ENCODE measurements at regions of chr12 and their contacts with region 1.

Region 1: DNA sequence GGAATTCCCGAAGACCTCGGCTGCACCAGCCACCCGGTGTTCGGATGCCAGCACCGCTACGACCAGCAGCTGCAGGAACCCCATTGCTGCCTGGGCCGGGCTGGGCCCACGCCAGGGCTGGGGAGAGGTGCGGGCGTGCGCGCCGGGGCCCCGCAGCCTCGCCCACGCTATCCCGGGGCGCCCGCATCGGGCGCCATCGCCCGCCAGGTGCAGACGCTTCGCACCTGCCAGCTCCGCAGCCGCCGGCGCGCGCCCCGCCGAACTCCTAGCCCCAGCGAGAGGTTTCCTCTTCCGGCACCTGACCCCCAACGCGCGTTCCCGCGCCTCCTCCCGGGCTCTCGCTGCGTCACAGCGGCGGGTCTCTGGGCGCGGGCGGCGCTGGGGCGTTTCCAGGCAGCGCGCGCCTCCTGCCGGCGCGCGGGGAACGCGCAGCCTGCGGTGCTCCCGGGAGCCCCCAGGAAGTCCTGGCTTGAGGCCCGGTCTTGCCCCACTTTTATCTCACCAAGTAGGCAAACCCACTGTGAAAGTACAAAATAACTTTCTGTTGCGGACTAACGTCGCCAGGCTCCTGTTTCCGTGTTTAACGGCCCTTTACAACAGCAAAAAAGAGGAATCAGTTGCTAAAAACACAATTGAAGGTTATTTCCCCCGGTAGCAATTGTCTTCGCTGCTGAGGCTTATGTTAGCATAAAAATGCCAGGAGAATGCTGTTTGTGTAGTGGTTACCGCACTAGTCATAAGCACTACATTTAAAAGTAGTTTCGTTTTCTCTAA is at the start of gene TM7SF3:
- DNase-seq: peak; percentile 83 to 98
- H3K4me3 ChIP-seq: peak within 1 kb of the TSS; percentile 97
- H3K27ac ChIP-seq: peak within 1 kb of the TSS; percentile 48
- H3K4me1 ChIP-seq: peaks cover 35% of the 10 kb centered on the region
- H3K27me3 ChIP-seq: no peaks in the 10 kb centered on the region
- CTCF ChIP-seq: peak; percentile 82
- total RNA-seq, gene TM7SF3: 57.0 and 67.7 TPM in 2 replicates

Region 2: GRCh38 chr12:26629864-26630263 is 384.4 kb before region 1 on chr12:
- CTCF ChIA-PET with region 1: no interaction called
- POLR2A ChIA-PET with region 1: no interaction called
- intact Hi-C with region 1: loop called (anchors 10 kb)
- DNase-seq: no peak
- H3K4me3 ChIP-seq: no peak overlapping the region
- H3K27ac ChIP-seq: no peak overlapping the region
- H3K4me1 ChIP-seq: peaks cover 6% of the 10 kb centered on the region; the same call in 1 of the 2 replicates
- H3K27me3 ChIP-seq: no peaks in the 10 kb centered on the region
- CTCF ChIP-seq: no peak

Region 3: GRCh38 chr12:26832822-26833742 is 181.2 kb before region 1 on chr12 and contains the start of gene ITPR2:
- CTCF ChIA-PET with region 1: interaction called, 3 read pairs
- POLR2A ChIA-PET with region 1: no interaction called
- intact Hi-C with region 1: loop called (anchors 1 kb)
- DNase-seq: peak; percentile 80 to 99
- H3K4me3 ChIP-seq: peak within 1 kb of the TSS; percentile 83
- H3K27ac ChIP-seq: peak within 1 kb of the TSS; percentile 61
- H3K4me1 ChIP-seq: peaks cover 14% of the 10 kb centered on the region
- H3K27me3 ChIP-seq: no peaks in the 10 kb centered on the region
- CTCF ChIP-seq: peak; percentile 51; the same call in 1 of the 2 replicates
- total RNA-seq, gene ITPR2: 16.2 and 26.0 TPM in 2 replicates

Region 4: DNA sequence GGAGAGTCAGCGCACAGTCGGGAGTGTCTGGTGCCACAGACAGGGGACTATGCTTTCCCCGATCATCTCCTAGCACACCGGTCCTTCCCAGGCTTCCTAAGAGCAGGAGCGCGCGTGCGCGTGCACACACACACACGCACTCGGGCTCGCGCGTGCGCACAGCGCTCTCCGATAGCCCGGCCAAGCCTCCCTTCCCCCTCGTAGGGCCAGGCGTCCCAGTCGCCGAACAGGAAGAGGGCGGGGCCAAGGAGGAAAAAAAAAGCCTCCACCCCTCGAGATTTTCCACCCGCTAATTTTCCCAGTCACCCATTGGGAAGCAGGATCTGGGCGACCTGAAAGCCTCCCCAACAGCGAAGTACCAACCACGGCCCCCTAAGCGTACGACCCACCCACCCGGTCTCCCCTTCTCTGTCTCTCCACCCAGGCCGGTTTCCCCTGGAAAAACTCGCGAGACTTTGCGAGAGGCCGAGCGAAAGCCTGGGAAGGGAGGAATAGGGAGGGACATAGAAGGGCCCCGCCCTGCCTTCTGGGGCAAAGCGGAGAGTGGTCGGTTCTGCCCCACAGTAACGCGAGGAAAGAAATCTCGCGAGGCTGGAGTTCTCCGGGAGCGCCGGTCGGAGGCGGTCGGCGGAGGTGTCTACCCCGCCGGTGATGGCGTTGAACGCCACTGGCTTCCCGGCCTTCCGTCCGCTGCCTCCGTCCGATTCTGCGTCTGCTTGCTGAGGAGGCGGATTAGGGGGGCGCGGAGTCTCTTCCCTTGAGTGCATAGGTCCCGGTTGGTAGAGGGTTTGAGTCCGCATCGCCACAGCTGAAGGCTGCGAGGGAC is 76.2 kb before region 1 on chr12 and contains the starts of genes FGFR1OP2 and INTS13:
- CTCF ChIA-PET with region 1: interaction called, 4 read pairs
- POLR2A ChIA-PET with region 1: no interaction called
- intact Hi-C with region 1: loop called (anchors 1 kb)
- DNase-seq: peak; percentile 94 to 100
- H3K4me3 ChIP-seq: peak within 1 kb of the TSS; percentile 90
- H3K27ac ChIP-seq: peak within 1 kb of the TSS; percentile 92
- H3K4me1 ChIP-seq: peaks cover 40% of the 10 kb centered on the region
- H3K27me3 ChIP-seq: no peaks in the 10 kb centered on the region
- CTCF ChIP-seq: no peak
- total RNA-seq, gene FGFR1OP2: 38.8 and 45.7 TPM in 2 replicates
- total RNA-seq, gene INTS13: 34.4 and 40.8 TPM in 2 replicates

Region 5: DNA sequence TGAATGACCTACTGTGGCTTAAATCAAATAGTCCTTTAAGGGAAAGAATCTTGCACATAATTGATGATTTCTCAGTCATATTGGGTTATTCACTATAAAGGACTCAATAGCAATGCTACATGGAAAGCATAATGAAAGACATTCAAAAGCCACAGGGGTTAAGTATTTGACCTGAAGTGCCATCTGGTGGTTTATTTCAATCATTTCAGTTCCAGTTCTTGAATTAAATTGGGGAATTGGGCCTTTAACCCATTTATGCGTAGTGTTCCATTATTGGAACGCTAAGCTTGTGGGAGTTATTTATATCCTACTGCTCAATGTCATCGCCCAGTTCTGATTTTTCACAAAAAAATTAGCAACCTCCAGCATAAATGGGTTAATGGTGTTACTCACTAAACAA is 109.4 kb after region 1 on chr12:
- CTCF ChIA-PET with region 1: interaction called, 22 read pairs
- POLR2A ChIA-PET with region 1: no interaction called
- intact Hi-C with region 1: loop called (anchors 2 kb)
- DNase-seq: no peak
- H3K4me3 ChIP-seq: no peak overlapping the region
- H3K27ac ChIP-seq: no peak overlapping the region
- H3K4me1 ChIP-seq: no peaks in the 10 kb centered on the region
- H3K27me3 ChIP-seq: no peaks in the 10 kb centered on the region
- CTCF ChIP-seq: peak; percentile 58

Region 6: DNA sequence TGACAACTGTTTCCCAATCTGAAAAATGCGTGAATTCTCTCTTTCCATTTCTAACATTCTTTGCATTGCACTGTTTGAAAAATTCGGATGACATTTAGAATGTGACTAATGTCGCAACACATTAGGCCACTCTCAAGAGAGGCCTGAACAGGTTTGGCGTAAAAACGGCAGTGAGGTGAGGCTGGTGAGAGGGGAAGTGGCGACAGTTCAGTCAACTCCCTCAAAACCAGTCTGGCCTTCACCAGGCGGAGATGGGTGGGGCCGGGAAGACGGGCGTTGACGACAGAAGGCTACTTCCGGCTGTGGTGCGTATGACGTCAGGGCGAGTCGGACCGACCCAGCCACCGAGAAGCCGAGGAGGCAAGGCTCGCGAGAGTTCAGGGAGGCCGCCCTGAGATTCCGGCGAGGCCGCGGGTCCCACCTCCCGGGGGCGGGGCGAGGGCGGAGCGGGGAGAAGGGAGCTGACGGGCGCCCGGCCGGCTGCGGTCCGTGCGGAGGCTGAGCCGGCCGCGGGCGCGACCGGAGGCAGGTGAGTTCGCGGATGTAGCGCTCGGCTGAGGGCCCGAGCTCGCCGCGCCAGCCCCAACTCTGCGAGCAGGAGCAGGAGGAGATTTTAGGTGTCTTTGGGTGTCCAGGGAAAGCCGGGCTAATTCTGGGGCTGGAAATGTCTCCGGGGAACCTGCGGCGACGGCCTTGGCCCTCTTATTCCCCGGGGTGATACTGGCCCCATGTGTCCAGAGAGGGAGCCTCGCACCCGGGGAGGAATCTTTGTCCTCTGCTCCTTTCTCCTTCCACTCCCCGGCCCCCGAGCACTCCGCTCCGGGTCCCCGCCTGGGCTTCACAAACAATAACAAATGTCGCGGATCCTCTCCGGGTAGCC is 229.8 kb after region 1 on chr12 and contains the start of gene STK38L:
- CTCF ChIA-PET with region 1: no interaction called
- POLR2A ChIA-PET with region 1: no interaction called
- intact Hi-C with region 1: loop called (anchors 1 kb)
- DNase-seq: peak; percentile 93 to 100
- H3K4me3 ChIP-seq: peak within 1 kb of the TSS; percentile 64
- H3K27ac ChIP-seq: peak within 1 kb of the TSS; percentile 75
- H3K4me1 ChIP-seq: peaks cover 19% of the 10 kb centered on the region
- H3K27me3 ChIP-seq: no peaks in the 10 kb centered on the region
- CTCF ChIP-seq: peak; percentile 56
- total RNA-seq, gene STK38L: 34.7 and 40.0 TPM in 2 replicates

Region 7: GRCh38 chr12:27703710-27704452 is 689.6 kb after region 1 on chr12:
- CTCF ChIA-PET with region 1: interaction called, 3 read pairs
- POLR2A ChIA-PET with region 1: no interaction called
- intact Hi-C with region 1: loop called (anchors 5 kb)
- DNase-seq: peak; percentile 71 to 77
- H3K4me3 ChIP-seq: no peak overlapping the region
- H3K27ac ChIP-seq: peak overlapping the region; percentile 67
- H3K4me1 ChIP-seq: 0 out of 2 replicates have a peak, but pooled peaks cover 3% of the 10 kb centered on the region
- H3K27me3 ChIP-seq: no peaks in the 10 kb centered on the region
- CTCF ChIP-seq: peak; percentile 96

Measured in PC-9 (cell line).